CD4-positive, alpha-beta memory T cell (primary cell): ENCODE measurements at regions of chr17 and their contacts with region 1.

Region 1: DNA sequence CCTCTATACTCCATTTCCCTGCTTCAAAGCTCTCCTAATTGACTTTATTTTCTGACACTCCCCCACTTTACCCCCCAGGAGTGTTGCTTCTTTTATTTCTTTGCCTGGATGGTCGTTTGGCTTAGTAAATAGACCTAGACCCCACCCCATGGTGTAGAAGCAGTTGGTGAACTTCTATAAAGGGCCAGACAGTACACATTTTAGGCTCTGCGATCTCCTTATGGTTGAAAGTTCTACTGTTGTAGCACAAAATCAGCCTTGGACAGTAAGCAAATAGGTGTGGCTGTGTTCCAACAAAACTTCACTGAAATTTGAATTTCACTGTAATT is 31.9 kb downstream of the ZNF287 start:
- DNase-seq: no peak
- H3K4me3 ChIP-seq: peak overlapping the region in 1 of 2 donors; percentile 90
- H3K4me3 Mint-ChIP-seq: peak overlapping the region; percentile 95 to 99 (median 98)
- H3K27ac ChIP-seq: no peak overlapping the region
- H3K27ac Mint-ChIP-seq: peak overlapping the region; percentile 75 to 99 (median 90)
- H3K4me1 ChIP-seq: peaks cover 7% of the 10 kb centered on the region
- H3K4me1 Mint-ChIP-seq: peaks cover 10 to 24% (median 17%) of the 10 kb centered on the region in 4 donors
- H3K27me3 ChIP-seq: no peaks in the 10 kb centered on the region
- H3K27me3 Mint-ChIP-seq: peaks cover 0 to 1% of the 10 kb centered on the region in 2 donors

Region 2: DNA sequence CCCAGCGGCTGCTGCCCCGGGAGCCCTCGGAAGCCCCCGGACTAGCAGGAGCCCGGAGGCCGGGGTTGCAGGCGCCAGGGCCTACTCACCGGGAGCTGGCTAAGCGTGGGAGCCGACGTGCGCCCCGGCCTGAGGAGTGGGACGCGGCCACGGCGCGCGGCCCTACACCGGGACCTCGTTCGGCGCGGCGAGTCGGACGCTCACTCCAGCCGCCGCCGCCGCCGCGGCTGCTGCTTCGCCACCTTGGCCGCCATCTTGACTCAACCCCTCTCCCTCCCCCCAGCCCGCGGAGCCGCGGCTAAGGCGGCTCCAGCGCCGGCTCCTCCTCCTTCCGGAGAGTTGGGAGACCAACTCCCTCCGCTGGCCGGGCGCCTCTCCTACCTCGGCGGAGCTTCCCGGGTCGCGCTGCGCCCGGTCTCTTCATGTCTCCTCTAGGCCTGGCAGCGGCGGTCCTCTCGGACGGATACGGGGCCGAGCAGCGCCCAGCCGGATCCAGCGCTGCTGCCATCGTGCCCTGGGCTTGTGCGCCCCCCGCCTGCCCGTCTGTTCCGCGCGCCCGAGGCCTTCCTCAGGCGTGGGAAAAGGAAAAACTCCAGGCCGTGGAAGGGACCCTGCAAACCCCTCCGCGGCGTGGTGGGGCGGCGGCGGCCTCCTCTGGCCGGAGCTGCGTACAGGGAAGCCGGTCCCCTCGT is 321.7 kb before region 1 on chr17 and contains the start of gene NCOR1:
- CTCF ChIA-PET with region 1: no interaction called
- POLR2A ChIA-PET with region 1: interaction called, 6 read pairs
- intact Hi-C with region 1: loop called (anchors 5 kb)
- DNase-seq: peak; percentile 82 to 89 (median 84)
- H3K4me3 ChIP-seq: peak within 1 kb of the TSS; percentile 59 to 80
- H3K4me3 Mint-ChIP-seq: peak within 1 kb of the TSS; percentile 93 to 100 (median 97)
- H3K27ac ChIP-seq: peak within 1 kb of the TSS; percentile 87
- H3K27ac Mint-ChIP-seq: peak within 1 kb of the TSS; percentile 88 to 98 (median 94)
- H3K4me1 ChIP-seq: peaks cover 59% of the 10 kb centered on the region
- H3K4me1 Mint-ChIP-seq: peaks cover 28 to 65% (median 38%) of the 10 kb centered on the region in 4 donors
- H3K27me3 ChIP-seq: no peaks in the 10 kb centered on the region
- H3K27me3 Mint-ChIP-seq: no peaks in the 10 kb centered on the region
- total RNA-seq, gene NCOR1: 156 to 169 TPM

Region 3: GRCh38 chr17:16415031-16415924 is 121.8 kb before region 1 on chr17 and contains the start of gene TRPV2:
- CTCF ChIA-PET with region 1: no interaction called
- POLR2A ChIA-PET with region 1: interaction called, 18 read pairs
- intact Hi-C with region 1: no loop called
- DNase-seq: peak; percentile 40 to 52 (median 42)
- H3K4me3 ChIP-seq: peak within 1 kb of the TSS; percentile 47 to 79
- H3K4me3 Mint-ChIP-seq: peak within 1 kb of the TSS; percentile 91 to 99 (median 97)
- H3K27ac ChIP-seq: peak within 1 kb of the TSS; percentile 92
- H3K27ac Mint-ChIP-seq: peak within 1 kb of the TSS; percentile 97 to 100 (median 99)
- H3K4me1 ChIP-seq: peaks cover 51% of the 10 kb centered on the region
- H3K4me1 Mint-ChIP-seq: peaks cover 26 to 65% (median 43%) of the 10 kb centered on the region in 4 donors
- H3K27me3 ChIP-seq: no peaks in the 10 kb centered on the region
- H3K27me3 Mint-ChIP-seq: no peaks in the 10 kb centered on the region
- total RNA-seq, gene TRPV2: 95.0 to 101 TPM

Region 4: GRCh38 chr17:16513873-16514272 is 23.2 kb before region 1 on chr17:
- CTCF ChIA-PET with region 1: no interaction called
- POLR2A ChIA-PET with region 1: no interaction called
- intact Hi-C with region 1: no loop called
- DNase-seq: no peak
- H3K4me3 ChIP-seq: no peak overlapping the region
- H3K4me3 Mint-ChIP-seq: no peak overlapping the region
- H3K27ac ChIP-seq: no peak overlapping the region
- H3K27ac Mint-ChIP-seq: no peak overlapping the region
- H3K4me1 ChIP-seq: no peaks in the 10 kb centered on the region
- H3K4me1 Mint-ChIP-seq: peaks cover 0 to 4% (median under 1%) of the 10 kb centered on the region in 4 donors
- H3K27me3 ChIP-seq: no peaks in the 10 kb centered on the region
- H3K27me3 Mint-ChIP-seq: peaks cover 13 to 18% of the 10 kb centered on the region in 2 donors

Region 5: GRCh38 chr17:16551878-16552636 is 15.0 kb after region 1 on chr17:
- CTCF ChIA-PET with region 1: interaction called, 5 read pairs
- POLR2A ChIA-PET with region 1: interaction called, 11 read pairs
- intact Hi-C with region 1: no loop called
- DNase-seq: no peak
- H3K4me3 ChIP-seq: no peak overlapping the region
- H3K4me3 Mint-ChIP-seq: no peak overlapping the region
- H3K27ac ChIP-seq: no peak overlapping the region
- H3K27ac Mint-ChIP-seq: no peak overlapping the region
- H3K4me1 ChIP-seq: no peaks in the 10 kb centered on the region
- H3K4me1 Mint-ChIP-seq: no peaks in the 10 kb centered on the region
- H3K27me3 ChIP-seq: no peaks in the 10 kb centered on the region
- H3K27me3 Mint-ChIP-seq: no peaks in the 10 kb centered on the region

Region 6: GRCh38 chr17:16589097-16589969 is 52.2 kb after region 1 on chr17:
- CTCF ChIA-PET with region 1: interaction called, 64 read pairs
- POLR2A ChIA-PET with region 1: interaction called, 43 read pairs
- intact Hi-C with region 1: loop called (anchors 1 kb)
- DNase-seq: peak; percentile 88 to 92 (median 90)
- H3K4me3 ChIP-seq: peak overlapping the region; percentile 19 to 68
- H3K4me3 Mint-ChIP-seq: peak overlapping the region; percentile 65 to 87 (median 80)
- H3K27ac ChIP-seq: no peak overlapping the region
- H3K27ac Mint-ChIP-seq: peak overlapping the region in 4 of 7 donors; percentile 30 to 75 (median 42)
- H3K4me1 ChIP-seq: peaks cover 12% of the 10 kb centered on the region
- H3K4me1 Mint-ChIP-seq: peaks cover 3 to 11% (median 8%) of the 10 kb centered on the region in 4 donors
- H3K27me3 ChIP-seq: no peaks in the 10 kb centered on the region
- H3K27me3 Mint-ChIP-seq: peaks cover 6 to 14% of the 10 kb centered on the region in 2 donors

Region 7: DNA sequence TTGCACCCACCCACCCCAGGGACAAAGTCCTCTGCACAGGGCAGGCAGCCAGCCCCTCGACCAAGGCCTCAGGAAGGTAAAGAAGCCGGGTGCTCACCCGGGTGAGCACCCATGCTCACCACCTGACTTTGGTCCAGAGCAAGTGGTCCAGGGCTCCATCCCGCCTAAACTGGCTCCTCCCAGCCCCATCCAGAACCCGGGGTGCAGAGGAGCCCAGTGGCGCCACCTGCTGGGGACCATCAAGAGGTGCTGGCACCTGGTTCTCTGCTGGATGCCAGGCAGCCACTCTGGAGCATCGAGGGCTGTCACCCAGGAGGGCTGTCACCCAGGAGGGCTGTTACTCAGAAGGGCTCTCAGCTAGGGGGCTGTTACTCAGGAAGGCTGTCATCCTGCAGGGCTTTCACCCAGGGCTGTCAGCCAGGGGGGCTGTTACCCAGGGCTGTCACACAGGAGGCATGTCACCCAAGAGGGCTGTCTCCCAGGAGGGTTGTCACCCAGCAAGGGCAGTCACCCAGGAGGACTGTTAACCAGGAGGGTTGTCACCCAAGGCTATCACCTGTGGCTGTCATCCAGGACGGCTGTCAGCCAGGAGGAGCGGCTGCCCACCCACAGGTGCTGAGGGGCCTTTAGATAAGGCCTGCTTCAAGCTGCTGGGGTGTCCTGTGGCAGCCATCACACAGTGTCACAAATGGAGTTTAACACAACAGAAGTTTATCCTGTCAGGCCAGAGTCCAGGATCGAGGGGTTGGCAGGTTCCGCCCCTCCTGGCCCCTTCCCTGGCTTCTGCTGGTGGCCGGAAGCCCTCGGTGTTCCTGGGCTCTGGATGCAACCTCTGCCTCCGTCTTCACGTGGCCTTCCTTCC is 336.3 kb after region 1 on chr17:
- CTCF ChIA-PET with region 1: no interaction called
- POLR2A ChIA-PET with region 1: no interaction called
- intact Hi-C with region 1: loop called (anchors 5 kb)
- DNase-seq: peak in 3 of 5 donors; percentile 2 to 16 (median 10)
- H3K4me3 ChIP-seq: no peak overlapping the region
- H3K4me3 Mint-ChIP-seq: no peak overlapping the region
- H3K27ac ChIP-seq: no peak overlapping the region
- H3K27ac Mint-ChIP-seq: no peak overlapping the region
- H3K4me1 ChIP-seq: no peaks in the 10 kb centered on the region
- H3K4me1 Mint-ChIP-seq: no peaks in the 10 kb centered on the region
- H3K27me3 ChIP-seq: no peaks in the 10 kb centered on the region
- H3K27me3 Mint-ChIP-seq: peaks cover 2 to 4% of the 10 kb centered on the region in 2 donors

Region 8: DNA sequence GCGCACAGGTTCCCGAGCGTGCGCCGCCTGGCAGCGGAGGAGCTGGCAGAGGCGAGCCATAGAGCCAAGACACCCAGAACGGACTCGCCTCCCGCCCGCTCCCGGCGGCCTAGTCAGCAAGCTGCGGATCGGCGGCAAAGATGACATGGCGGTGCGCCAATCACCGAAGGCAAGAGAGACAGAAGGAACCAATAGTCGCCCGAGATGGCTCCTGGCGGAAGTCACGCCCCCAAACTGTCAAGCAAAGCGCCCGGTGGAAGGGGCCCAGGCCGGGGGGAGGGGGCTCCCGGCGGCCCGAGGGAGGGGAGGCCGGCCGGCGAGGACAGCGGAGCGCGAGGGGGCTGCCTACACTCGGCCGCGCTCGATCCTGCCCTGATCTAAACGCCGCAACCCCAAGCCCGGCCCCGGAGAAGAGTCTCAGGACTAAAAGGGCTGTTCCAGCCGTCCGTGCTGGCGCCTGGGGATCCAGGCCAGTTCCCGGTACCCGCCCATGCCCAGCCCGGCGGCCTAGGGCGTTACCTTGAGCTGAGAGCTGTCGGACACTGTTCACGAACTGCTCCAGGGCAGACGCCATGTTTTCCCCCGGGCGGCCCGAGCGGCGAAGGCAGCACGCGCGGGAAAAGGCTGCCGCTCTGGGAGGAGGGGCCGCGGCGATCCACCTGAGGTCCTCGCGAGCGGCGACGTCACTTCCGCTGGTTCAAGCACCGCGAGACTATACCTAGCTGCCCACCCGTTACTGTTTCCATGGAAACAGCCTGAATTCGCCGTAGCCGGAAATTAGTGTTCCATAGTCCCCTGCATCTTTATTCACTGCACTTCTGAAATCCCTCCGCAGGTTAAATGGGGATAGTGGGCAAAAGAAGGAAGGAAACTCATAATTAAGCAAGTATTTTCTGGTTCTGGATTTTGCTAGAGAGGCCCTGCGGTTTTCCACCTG is 743.8 kb after region 1 on chr17 and contains the start of gene COPS3:
- CTCF ChIA-PET with region 1: no interaction called
- POLR2A ChIA-PET with region 1: no interaction called
- intact Hi-C with region 1: loop called (anchors 5 kb)
- DNase-seq: peak; percentile 96 to 98 (median 97)
- H3K4me3 ChIP-seq: peak within 1 kb of the TSS; percentile 62 to 99
- H3K4me3 Mint-ChIP-seq: peak within 1 kb of the TSS; percentile 90 to 96 (median 94)
- H3K27ac ChIP-seq: peak within 1 kb of the TSS; percentile 89
- H3K27ac Mint-ChIP-seq: peak within 1 kb of the TSS; percentile 93 to 98 (median 96)
- H3K4me1 ChIP-seq: peaks cover 33% of the 10 kb centered on the region
- H3K4me1 Mint-ChIP-seq: peaks cover 24 to 55% (median 40%) of the 10 kb centered on the region in 4 donors
- H3K27me3 ChIP-seq: no peaks in the 10 kb centered on the region
- H3K27me3 Mint-ChIP-seq: no peaks in the 10 kb centered on the region
- total RNA-seq, gene COPS3: 45.4 to 60.5 TPM